ENCODE measurements at regions of chr10 and their contacts with region 1.

Region 1: GRCh38 chr10:132458593-132459300 is 61.7 kb downstream of the PWWP2B start:
- DNase-seq: peak; percentile 84
- CTCF ChIP-seq: peak; percentile 96

Region 2: DNA sequence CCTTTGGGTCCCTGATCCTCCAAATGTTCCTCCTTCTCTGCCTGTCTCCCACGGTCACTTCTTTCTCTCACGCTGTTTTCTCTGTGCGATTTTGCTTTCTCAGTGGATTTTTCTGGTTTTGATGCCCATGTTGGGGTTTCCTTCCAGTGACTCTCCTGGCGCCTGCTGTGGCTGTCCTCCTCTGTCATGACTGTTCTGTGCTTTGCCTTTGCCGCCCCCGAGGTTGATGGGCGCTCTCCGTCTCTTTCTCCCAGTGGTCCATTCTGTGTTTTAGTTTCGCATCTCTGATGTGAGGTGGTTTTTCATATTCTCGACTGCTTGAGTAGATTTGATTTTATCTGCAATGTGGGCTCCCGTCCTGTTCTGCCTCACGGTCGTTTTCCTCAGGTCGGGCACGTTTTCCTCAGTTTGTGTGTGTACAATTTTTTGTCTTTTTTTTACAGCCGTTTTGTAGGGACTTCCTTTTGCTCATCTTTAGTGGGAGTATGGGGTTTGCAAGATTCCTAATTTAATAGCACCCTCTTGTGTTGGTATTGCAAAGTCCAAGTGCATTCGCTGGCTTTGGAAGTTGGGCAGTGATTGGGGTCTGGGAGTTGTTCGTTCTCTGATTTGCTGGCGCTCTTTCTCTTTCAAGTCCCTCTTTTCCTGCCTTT is 178.9 kb after region 1 on chr10:
- CTCF ChIA-PET with region 1: interaction called, 35 read pairs
- POLR2A ChIA-PET with region 1: no interaction called
- DNase-seq: peak; percentile 83
- CTCF ChIP-seq: peak; percentile 64

Measured in GM10248 (cell line).